Naive thymus-derived CD4-positive, alpha-beta T cell (primary cell): ENCODE measurements at regions of chr6 and their contacts with region 1.

Region 1: GRCh38 chr6:125956506-125957390 is at the start of gene HINT3:
- DNase-seq: peak; percentile 94 to 98 (median 97)
- ATAC-seq: peak; percentile 96
- H3K4me3 ChIP-seq: peak within 1 kb of the TSS; percentile 78
- H3K4me3 Mint-ChIP-seq: peak within 1 kb of the TSS in 1 of 10 donors; percentile 69
- H3K27ac ChIP-seq: peak within 1 kb of the TSS; percentile 98
- H3K27ac Mint-ChIP-seq: peak within 1 kb of the TSS in 3 of 9 donors; percentile 62 to 76 (median 73)
- H3K4me1 ChIP-seq: peaks cover 16 to 18% of the 10 kb centered on the region in 2 donors
- H3K4me1 Mint-ChIP-seq: peaks cover 0 to 22% (median 7%) of the 10 kb centered on the region in 7 donors
- H3K27me3 ChIP-seq: no peaks in the 10 kb centered on the region
- H3K27me3 Mint-ChIP-seq: peaks cover 0 to 7% (median 5%) of the 10 kb centered on the region in 5 donors
- total RNA-seq, gene HINT3: 7.7 to 12.4 (median 9.5) TPM

Region 2: DNA sequence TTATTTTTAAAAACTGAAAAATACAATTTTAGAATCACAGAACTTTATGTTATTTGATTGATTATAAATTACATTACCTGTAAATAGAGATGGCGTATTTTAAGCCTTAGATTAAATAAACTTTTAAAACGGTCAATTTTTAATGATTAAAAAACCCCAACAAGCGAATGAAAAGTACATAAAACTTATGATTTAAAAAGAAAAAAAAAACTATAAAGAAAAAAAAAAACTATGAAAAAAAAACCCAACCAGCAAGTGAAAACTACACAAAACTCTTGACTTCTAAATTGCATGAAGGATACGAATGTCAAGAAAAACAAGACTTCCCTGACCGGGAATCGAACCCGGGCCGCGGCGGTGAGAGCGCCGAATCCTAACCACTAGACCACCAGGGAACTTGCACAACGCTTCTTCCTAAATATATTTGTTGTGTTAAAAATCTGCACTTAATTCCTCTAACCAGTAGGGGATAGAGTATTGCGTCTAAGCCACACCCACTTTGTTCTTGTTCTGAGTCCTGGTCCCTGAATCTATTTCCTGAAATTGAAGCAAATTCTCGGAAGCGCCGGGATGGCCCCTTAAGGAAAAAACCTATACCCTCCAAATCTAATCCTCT is 176.7 kb before region 1 on chr6:
- CTCF ChIA-PET with region 1: interaction called, 26 read pairs
- POLR2A ChIA-PET with region 1: interaction called, 70 read pairs
- intact Hi-C with region 1: loop called (anchors 1 kb)
- DNase-seq: peak; percentile 83 to 96 (median 94)
- ATAC-seq: peak; percentile 89
- H3K4me3 ChIP-seq: peak overlapping the region; percentile 84
- H3K4me3 Mint-ChIP-seq: no peak overlapping the region
- H3K27ac ChIP-seq: peak overlapping the region; percentile 77
- H3K27ac Mint-ChIP-seq: no peak overlapping the region
- H3K4me1 ChIP-seq: peaks cover 4 to 19% of the 10 kb centered on the region in 2 donors
- H3K4me1 Mint-ChIP-seq: peaks cover 5 to 27% (median 22%) of the 10 kb centered on the region in 7 donors
- H3K27me3 ChIP-seq: no peaks in the 10 kb centered on the region
- H3K27me3 Mint-ChIP-seq: peaks cover 0 to 28% (median 0%) of the 10 kb centered on the region in 5 donors

Region 3: DNA sequence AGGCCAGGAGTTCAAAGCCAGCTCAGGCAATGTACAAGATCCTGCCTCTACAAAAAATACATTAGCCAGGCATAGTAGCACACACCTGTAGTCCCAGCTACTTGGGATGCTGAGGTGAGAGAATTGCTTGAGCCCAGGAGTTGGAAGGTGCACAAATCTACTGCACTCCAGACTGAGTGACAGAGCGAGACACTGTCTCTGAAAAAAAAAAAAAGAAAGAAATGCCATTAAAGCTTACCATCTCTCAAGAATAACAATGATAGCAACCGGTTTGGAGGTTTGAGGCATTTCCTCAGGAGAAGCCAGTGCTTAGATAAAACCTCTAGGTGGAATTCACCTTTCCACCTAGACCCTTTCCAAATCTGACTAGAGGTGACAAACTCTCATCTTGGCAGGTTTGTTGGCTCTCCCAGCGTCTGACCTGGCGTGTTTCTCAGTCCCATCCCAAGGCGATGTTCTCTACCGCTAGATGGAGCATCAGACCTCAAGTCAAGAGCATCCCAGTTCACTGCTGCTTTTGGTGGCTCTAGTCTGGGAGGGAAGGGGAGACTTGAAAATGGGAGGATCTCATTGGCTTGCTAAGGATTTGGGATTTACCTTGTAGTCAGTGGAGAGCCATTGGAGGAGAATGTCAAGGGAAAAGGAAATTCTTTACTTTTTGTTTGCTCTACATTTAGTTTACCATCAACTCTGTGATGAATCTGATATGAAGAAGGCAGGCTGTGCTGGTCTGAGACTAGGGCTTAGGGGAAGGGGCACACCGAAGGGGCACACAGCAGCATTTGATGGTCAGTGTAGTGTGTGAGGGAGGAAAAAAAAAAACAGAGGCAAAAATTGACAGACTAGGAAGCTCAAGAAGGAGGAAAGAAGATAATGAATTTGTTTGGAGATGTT is 98.1 kb before region 1 on chr6:
- CTCF ChIA-PET with region 1: no interaction called
- POLR2A ChIA-PET with region 1: no interaction called
- intact Hi-C with region 1: loop called in 1 of 2 experiments (anchors 1 kb)
- DNase-seq: peak in 3 of 9 donors; percentile 10 to 26 (median 23)
- ATAC-seq: peak; percentile 52
- H3K4me3 ChIP-seq: no peak overlapping the region
- H3K4me3 Mint-ChIP-seq: no peak overlapping the region
- H3K27ac ChIP-seq: no peak overlapping the region
- H3K27ac Mint-ChIP-seq: peak overlapping the region in 1 of 9 donors; percentile 79
- H3K4me1 ChIP-seq: no peaks in the 10 kb centered on the region
- H3K4me1 Mint-ChIP-seq: peaks cover 0 to 7% (median 3%) of the 10 kb centered on the region in 7 donors
- H3K27me3 ChIP-seq: no peaks in the 10 kb centered on the region
- H3K27me3 Mint-ChIP-seq: no peaks in the 10 kb centered on the region

Region 4: GRCh38 chr6:125906158-125906998 is 50.4 kb before region 1 on chr6:
- CTCF ChIA-PET with region 1: interaction called, 6 read pairs
- POLR2A ChIA-PET with region 1: interaction called, 4 read pairs
- intact Hi-C with region 1: loop called in 1 of 2 experiments (anchors 1 kb)
- DNase-seq: peak in 7 of 9 donors; percentile 18 to 49 (median 29)
- ATAC-seq: peak; percentile 82
- H3K4me3 ChIP-seq: no peak overlapping the region
- H3K4me3 Mint-ChIP-seq: no peak overlapping the region
- H3K27ac ChIP-seq: no peak overlapping the region
- H3K27ac Mint-ChIP-seq: peak overlapping the region in 3 of 9 donors; percentile 17 to 60 (median 21)
- H3K4me1 ChIP-seq: no peaks in the 10 kb centered on the region
- H3K4me1 Mint-ChIP-seq: peaks cover 0 to 48% (median 0%) of the 10 kb centered on the region in 7 donors
- H3K27me3 ChIP-seq: no peaks in the 10 kb centered on the region
- H3K27me3 Mint-ChIP-seq: no peaks in the 10 kb centered on the region

Region 5: DNA sequence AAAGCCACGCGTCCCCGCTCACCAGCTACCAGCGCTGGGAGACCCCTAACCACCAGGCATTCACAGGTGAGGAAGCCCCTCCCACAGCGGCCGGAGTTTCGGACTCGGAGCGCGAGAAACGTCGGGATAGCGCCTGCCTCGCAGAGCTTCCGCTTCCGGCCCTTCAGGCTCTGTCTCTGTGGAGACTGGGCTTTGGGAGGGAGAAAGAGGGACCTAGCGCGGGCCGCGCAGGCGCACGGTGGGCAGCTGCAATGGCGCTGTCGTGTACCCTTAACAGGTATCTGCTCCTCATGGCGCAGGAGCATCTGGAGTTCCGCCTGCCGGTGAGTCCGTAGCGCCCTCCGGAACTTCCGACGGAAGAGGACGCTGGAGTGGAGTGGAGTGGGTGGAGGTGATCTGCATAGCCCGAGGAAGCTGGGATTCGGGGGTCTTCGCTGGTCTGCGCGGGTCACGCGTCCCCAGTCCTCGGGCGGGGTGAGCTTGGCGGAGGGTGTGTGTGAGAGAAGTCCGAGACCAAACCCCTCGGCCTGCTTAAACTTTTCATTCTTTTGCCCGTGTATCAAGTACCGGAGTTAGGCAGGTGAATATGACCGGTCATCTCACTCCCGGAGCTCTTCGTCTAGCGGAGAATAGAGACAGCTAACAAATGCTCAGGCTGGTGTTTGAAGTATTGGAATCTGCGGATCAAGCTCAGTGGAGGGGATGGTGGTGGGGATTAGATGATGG is 29.7 kb after region 1 on chr6 and contains the start of gene TRMT11:
- CTCF ChIA-PET with region 1: interaction called, 5 read pairs
- POLR2A ChIA-PET with region 1: interaction called, 33 read pairs
- intact Hi-C with region 1: loop called (anchors 1 kb)
- DNase-seq: peak; percentile 58 to 80 (median 77)
- ATAC-seq: peak; percentile 95
- H3K4me3 ChIP-seq: peak within 1 kb of the TSS; percentile 89
- H3K4me3 Mint-ChIP-seq: peak within 1 kb of the TSS in 4 of 10 donors; percentile 12 to 40 (median 24)
- H3K27ac ChIP-seq: peak within 1 kb of the TSS; percentile 76
- H3K27ac Mint-ChIP-seq: no peak within 1 kb of the TSS
- H3K4me1 ChIP-seq: peaks cover 14 to 21% of the 10 kb centered on the region in 2 donors
- H3K4me1 Mint-ChIP-seq: peaks cover 0 to 19% (median 2%) of the 10 kb centered on the region in 7 donors
- H3K27me3 ChIP-seq: no peaks in the 10 kb centered on the region
- H3K27me3 Mint-ChIP-seq: no peaks in the 10 kb centered on the region
- total RNA-seq, gene TRMT11: 13.6 to 34.1 (median 20.1) TPM

Region 6: DNA sequence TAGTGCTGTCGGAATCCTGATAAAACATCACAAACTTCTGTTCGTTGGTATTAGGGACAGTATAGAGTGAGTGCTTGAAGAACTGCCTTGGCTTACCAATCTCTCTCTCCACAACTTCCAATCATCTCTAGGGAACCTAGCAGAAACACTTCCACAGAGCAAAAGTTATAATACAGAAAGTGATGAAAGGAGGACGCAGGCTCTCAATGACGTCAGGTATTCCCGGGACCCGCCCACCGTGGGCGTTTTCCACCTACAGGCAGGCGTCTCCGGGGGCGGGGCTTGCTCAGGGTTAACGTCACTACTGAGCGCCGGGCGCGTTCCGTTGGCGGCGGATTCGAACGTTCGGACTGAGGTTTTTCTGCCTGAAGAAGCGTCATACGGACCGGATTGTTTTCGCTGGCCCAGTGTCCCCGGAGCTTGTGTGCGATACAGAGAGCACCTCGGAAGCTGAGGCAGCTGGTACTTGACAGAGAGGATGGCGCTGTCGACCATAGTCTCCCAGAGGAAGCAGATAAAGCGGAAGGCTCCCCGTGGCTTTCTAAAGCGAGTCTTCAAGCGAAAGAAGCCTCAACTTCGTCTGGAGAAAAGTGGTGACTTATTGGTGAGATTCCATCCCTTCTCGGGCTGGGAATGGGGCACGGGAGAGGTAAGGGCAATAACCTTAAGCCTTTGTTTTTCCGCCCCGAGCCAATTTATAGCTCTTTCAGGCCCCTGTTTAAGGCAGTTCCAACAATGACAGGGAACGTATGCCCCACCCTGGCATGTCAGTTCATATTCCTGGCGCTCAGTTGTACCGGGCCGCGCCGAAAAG is 383.3 kb after region 1 on chr6 and contains the start of gene CENPW:
- CTCF ChIA-PET with region 1: no interaction called
- POLR2A ChIA-PET with region 1: no interaction called
- intact Hi-C with region 1: loop called (anchors 1 kb)
- DNase-seq: peak; percentile 84 to 96 (median 87)
- ATAC-seq: peak; percentile 98
- H3K4me3 ChIP-seq: peak within 1 kb of the TSS; percentile 80
- H3K4me3 Mint-ChIP-seq: no peak within 1 kb of the TSS
- H3K27ac ChIP-seq: peak within 1 kb of the TSS; percentile 33
- H3K27ac Mint-ChIP-seq: no peak within 1 kb of the TSS
- H3K4me1 ChIP-seq: peaks cover 6 to 12% of the 10 kb centered on the region in 2 donors
- H3K4me1 Mint-ChIP-seq: peaks cover 5 to 21% (median 12%) of the 10 kb centered on the region in 7 donors
- H3K27me3 ChIP-seq: no peaks in the 10 kb centered on the region
- H3K27me3 Mint-ChIP-seq: no peaks in the 10 kb centered on the region
- total RNA-seq, gene CENPW: 1.2 to 37.1 (median 3.9) TPM